H1 (cell line): ENCODE measurements at regions of chr14 and their contacts with region 1.

Region 1: GRCh38 chr14:79809849-79810612 is 401.3 kb downstream of the DIO2 start:
- DNase-seq: no peak
- H3K4me3 ChIP-seq: no peak overlapping the region
- H3K27ac ChIP-seq: no peak overlapping the region
- H3K4me1 ChIP-seq: no peaks in the 10 kb centered on the region
- H3K27me3 ChIP-seq: no peaks in the 10 kb centered on the region
- CTCF ChIP-seq: peak in 2 of 3 experiments; percentile 12 to 47; a peak in 2 of 4 replicates
- EP300 ChIP-seq: no peak
- POLR2A ChIP-seq: no peak
- RAD21 ChIP-seq: peak; percentile 56 to 60

Region 2: GRCh38 chr14:79724934-79725717 is 84.9 kb before region 1 on chr14:
- CTCF ChIA-PET with region 1: no interaction called
- POLR2A ChIA-PET with region 1: no interaction called
- DNase-seq: no peak
- H3K4me3 ChIP-seq: no peak overlapping the region
- H3K27ac ChIP-seq: no peak overlapping the region
- H3K4me1 ChIP-seq: no peaks in the 10 kb centered on the region
- H3K27me3 ChIP-seq: no peaks in the 10 kb centered on the region
- CTCF ChIP-seq: no peak
- EP300 ChIP-seq: no peak
- POLR2A ChIP-seq: no peak
- RAD21 ChIP-seq: no peak

Region 3: DNA sequence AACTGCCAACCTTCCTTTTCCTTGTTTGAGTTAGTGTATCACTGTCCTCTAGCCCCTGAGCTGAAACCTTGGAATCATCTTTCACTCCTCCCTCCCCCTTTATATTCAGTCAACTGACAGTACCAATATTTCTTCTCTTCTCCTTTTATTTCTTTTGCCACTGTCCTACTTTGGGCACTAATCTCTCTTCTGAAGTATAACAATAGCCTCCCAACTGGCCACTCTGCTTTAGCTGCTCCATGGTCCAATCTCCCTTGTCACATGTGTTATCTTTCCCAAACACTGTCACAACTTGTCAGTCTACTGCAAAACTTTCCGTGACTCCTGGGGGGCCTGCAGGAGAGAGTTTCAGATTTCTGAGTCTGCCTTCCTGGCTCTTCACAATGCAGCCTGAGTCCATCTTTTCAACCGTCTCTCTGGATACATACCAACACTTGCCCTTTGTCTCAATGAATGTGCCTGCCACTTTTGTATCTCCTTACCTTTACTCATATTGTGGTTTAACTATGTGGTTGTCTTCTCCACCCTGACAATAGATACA is 69.9 kb before region 1 on chr14:
- CTCF ChIA-PET with region 1: no interaction called
- POLR2A ChIA-PET with region 1: no interaction called
- DNase-seq: no peak
- H3K4me3 ChIP-seq: no peak overlapping the region
- H3K27ac ChIP-seq: no peak overlapping the region
- H3K4me1 ChIP-seq: no peaks in the 10 kb centered on the region
- H3K27me3 ChIP-seq: no peaks in the 10 kb centered on the region
- CTCF ChIP-seq: no peak
- EP300 ChIP-seq: no peak
- POLR2A ChIP-seq: no peak
- RAD21 ChIP-seq: no peak

Region 4: GRCh38 chr14:79820866-79821535 is 11.0 kb after region 1 on chr14:
- CTCF ChIA-PET with region 1: interaction called, 13 read pairs
- POLR2A ChIA-PET with region 1: no interaction called
- DNase-seq: no peak
- H3K4me3 ChIP-seq: no peak overlapping the region
- H3K27ac ChIP-seq: no peak overlapping the region
- H3K4me1 ChIP-seq: peaks cover 0 to 13% (median 2%) of the 10 kb centered on the region in 4 experiments; a peak in 3 of 7 replicates
- H3K27me3 ChIP-seq: peaks cover 0 to 2% (median 0%) of the 10 kb centered on the region in 4 experiments; a peak in 1 of 7 replicates
- CTCF ChIP-seq: no peak
- EP300 ChIP-seq: no peak
- POLR2A ChIP-seq: no peak
- RAD21 ChIP-seq: no peak

Region 5: DNA sequence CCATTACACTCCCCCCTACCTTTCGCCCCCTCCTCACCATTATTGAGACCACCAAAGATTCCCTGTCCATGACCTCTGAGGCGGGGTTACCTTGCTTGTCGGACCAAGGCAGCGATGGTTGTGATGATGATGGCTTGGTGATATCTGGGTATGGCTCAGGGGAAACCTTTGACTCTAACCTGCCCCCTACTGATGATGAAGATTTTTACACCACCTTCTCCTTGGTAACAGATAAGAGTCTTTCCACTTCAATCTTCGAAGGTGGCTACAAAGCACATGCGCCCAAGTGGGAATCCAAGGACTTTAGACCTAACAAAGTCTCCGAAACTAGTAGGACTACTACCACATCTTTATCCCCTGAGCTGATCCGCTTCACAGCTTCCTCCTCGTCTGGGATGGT is 51.1 kb after region 1 on chr14:
- CTCF ChIA-PET with region 1: interaction called, 14 read pairs
- POLR2A ChIA-PET with region 1: no interaction called
- DNase-seq: peak in 1 of 2 experiments; percentile 48
- H3K4me3 ChIP-seq: no peak overlapping the region
- H3K27ac ChIP-seq: no peak overlapping the region
- H3K4me1 ChIP-seq: no peaks in the 10 kb centered on the region
- H3K27me3 ChIP-seq: no peaks in the 10 kb centered on the region
- CTCF ChIP-seq: peak; percentile 34 to 59 (median 55)
- EP300 ChIP-seq: no peak
- POLR2A ChIP-seq: no peak
- RAD21 ChIP-seq: peak; percentile 73 to 79